ENCODE measurements at regions of chr1 and their contacts with region 1.

Region 1: DNA sequence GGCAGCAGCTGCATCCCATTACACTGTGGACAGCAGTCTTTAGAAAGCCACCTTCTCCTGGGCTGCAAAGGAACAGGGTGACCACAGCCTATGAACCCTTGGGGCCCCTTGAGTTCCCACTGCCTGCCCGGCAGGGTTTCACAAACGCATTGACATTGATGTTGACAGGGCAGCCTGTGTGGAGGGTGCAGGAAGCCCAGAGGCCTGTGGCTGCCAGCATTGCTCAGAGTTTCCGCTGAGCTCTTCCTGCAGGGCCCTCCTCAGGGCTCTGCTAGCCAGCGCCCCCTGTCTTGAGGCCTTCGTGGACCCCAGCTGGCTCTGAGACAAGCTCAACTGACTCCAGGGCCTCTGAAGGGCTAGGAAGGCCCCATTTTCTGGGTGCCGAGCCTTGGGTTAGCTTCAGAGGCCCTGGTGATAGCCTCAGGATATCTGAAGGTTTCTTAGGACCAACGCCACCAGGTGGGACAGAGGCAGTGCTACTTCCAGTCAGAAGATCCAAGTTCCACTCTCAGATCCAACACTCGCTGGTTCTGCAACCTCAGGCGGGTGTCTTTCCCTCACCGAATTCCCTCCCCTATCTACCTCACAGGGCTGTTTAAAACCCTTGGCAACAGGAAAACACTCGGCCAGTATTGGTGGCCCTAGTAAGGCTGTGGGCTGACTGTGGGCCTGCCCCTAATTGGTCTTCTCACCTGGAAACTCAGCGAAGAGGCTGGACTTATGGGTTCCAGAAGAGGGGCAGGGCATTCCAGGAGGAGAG is 27.2 kb upstream of the EPS8L3 start:
- DNase-seq: peak in 8 of 10 donors; percentile 15 to 59 (median 37)
- H3K4me3 ChIP-seq: no peak overlapping the region
- H3K27ac ChIP-seq: peak overlapping the region in 9 of 59 donors; percentile 9 to 51 (median 38)
- H3K27me3 ChIP-seq: no peaks in the 10 kb centered on the region
- CTCF ChIP-seq: peak in 42 of 56 donors; percentile 9 to 46 (median 28)

Region 2: DNA sequence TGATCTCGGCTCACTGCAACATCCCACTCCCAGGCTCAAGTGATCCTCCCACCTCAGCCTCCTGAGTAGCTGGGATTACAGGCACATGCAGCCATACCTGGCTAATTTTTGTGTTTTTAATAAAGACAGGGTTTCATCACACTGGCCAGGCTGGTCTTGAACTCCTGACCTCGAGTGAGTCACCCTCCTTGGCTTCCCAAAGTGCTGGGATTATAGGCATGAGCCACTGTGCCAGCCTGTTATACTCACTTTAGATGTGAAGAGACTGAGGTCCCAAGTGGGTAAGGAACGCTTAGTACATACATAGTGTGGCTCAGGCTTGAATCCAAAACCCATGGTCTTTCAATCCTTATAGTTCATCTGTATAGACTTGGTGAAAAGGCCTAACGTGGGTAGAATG is 36.6 kb after region 1 on chr1:
- intact Hi-C with region 1: no loop called
- DNase-seq: no peak
- H3K4me3 ChIP-seq: no peak overlapping the region
- H3K27ac ChIP-seq: no peak overlapping the region
- H3K27me3 ChIP-seq: no peaks in the 10 kb centered on the region
- CTCF ChIP-seq: no peak

Region 3: DNA sequence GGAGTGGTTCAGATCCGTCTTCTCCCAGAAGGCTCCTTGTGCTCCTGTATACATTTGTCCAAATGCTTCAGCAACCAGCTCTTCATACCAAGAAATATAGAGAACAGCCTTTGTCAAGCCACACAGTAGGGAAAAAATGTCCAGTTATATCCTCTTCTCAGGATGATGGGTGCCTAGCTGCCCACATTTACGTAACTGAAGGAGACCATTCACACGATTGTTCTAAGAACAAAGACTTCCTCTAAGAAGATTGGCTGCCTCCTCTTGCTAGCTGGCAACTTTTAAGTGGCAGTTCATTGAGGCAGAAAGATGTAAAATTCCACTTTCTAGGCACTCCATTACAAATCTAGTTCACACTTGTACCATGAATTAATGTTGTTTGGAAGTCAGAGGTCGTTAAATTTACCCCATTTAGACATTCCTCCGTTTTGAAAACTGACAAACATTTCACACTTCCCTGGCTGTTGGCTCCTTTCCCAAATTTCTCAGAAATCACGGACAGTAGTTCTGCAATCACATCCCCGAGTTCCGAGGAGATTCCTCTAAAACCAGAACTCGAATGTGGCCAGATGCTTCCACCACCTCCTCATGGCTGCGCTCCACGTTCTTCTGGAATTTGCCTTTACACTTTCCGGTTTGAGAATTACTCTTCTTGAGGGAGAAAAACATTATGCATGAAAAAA is 74.2 kb after region 1 on chr1:
- intact Hi-C with region 1: loop called (anchors 5 kb)
- DNase-seq: peak in 3 of 10 donors; percentile 59 to 64 (median 61)
- H3K4me3 ChIP-seq: peak overlapping the region in 4 of 59 donors; percentile 1 to 37 (median 8)
- H3K27ac ChIP-seq: peak overlapping the region in 54 of 59 donors; percentile 11 to 85 (median 53)
- H3K27me3 ChIP-seq: no peaks in the 10 kb centered on the region
- CTCF ChIP-seq: peak in 1 of 56 donors; percentile 19

Region 4: GRCh38 chr1:109877320-109877771 is 86.4 kb after region 1 on chr1:
- intact Hi-C with region 1: loop called in 1 of 2 experiments (anchors 5 kb)
- DNase-seq: peak in 6 of 10 donors; percentile 40 to 73 (median 58)
- H3K4me3 ChIP-seq: peak overlapping the region in 22 of 59 donors; percentile 2 to 52 (median 17)
- H3K27ac ChIP-seq: peak overlapping the region; percentile 64 to 99 (median 89)
- H3K27me3 ChIP-seq: no peaks in the 10 kb centered on the region
- CTCF ChIP-seq: peak in 43 of 56 donors; percentile 7 to 61 (median 38)

Region 5: DNA sequence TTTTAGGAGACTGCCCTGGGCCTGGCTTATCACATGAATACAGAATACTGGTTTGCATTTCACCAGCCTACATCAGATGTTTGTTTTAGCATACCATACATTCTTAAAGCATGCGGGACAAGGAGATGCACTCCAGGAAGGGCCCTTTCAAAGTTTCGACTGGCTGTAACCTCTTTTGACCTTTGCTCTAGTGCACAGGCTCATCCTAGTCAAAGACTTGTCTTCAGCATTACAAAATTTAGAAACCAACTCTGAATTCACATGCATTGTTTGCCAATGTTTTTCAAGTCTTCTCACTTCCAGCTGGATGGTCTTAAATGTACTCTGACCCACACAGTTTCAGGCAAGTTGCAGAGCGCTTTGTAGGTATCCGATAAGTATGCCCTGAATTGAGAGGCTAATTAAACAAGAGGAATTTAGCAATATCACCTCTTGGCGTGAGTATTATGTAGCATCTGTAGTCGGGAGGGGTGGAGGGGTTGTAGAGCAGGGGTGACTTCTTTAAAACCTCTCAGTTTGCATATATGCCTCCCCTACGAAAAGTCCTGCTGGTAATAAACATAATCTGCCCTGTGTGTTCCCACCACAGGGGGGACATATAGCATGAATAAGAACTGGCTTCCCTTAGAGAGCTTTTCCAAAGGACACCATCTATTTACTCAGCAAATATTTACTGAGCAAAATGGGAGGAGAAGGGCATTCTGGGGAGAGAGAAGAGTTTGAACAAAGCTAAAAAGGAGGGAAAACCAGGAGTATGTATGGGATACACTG is 169.2 kb after region 1 on chr1:
- intact Hi-C with region 1: no loop called
- DNase-seq: no peak
- H3K4me3 ChIP-seq: no peak overlapping the region
- H3K27ac ChIP-seq: no peak overlapping the region
- H3K27me3 ChIP-seq: no peaks in the 10 kb centered on the region
- CTCF ChIP-seq: no peak